ENCODE measurements at regions of chr20 and their contacts with region 1.

Region 1: DNA sequence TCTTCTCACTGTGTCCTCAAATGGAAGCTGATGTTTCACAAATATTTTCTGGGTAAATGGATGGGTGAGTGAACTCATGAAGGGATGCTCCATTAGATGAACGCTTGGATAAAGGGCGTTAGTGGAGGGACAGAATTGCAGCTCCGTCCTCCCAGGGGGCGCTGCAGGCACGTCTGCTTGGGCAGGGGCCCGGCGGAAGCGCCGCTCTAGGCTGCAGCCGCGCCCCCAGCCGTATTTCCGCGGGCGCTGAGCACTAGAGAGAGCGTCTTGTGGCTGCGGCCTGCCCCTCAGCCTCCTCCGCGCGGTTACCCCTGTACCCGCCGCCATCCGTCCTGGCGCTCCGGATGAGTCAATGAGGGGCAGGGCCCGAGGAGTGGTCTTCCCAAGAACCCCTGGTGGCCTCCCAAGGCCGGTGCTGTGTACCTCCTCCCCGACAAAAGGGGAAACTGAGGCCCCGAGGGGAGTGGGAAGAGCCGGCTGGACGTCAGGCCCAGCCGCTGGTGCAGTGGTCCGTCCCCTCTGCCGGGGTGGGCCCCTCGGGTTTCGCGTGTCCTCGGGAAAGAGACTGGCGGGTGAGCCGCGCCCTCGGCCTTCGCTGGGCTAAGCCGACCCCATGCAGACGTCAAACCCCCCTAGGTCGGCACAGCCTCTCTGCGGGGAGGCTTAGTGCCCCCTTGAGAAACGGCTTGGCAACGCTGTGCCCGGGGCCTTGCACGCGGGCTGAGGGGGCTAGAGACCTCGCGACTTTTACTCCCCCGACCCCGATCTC is 11.5 kb upstream of the SNHG17 start:
- DNase-seq: peak; percentile 77 to 98 (median 90)

Region 2: GRCh38 chr20:38242848-38243449 is 203.7 kb before region 1 on chr20:
- intact Hi-C with region 1: no loop called
- DNase-seq: no peak

Region 3: GRCh38 chr20:38434743-38435554 is 11.7 kb before region 1 on chr20 and contains the start of gene SNHG17:
- intact Hi-C with region 1: loop called (anchors 1 kb)
- DNase-seq: peak; percentile 81 to 99 (median 90)

Region 4: DNA sequence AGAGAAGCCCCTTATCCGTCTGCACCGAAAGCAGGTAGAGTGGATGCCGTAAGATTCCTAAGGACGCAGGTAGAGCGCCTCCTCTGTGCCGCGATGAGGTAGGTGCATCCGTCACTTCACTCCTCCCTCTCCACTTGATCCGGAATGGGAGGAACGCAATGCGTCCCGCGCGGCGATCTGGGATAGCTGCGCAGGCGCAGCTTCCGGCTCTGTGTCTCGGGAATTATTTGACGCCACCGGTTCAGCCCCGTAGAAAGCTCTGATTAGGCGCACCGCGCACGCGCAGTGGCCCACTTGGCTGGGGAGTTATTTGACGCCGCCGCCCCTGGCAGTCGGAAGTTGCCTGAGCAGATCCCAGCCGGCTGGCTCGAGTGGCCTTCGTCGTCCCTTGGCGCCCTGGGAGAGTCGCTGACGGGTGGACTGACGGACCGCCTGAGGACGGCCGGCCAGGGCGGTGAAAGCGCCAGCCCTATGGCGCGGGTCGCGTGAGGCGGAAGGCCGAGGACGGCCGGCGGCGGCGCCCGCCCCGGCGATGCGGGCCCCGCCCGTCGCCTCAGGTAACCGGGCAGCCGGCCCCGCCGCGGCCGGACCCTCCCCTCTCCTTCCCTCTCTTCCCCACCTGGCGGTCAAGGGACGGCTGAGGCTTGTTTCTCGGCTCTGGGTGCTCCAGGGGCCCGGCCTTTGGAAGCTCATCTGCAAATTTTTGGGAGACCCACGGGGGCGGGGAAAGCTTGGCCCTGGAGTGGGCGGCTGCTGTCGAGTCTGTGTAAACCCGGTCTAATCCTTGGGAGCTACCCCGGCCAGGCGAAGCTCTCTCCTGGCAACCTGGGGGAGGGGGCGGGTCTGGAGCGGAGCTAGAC is 26.1 kb after region 1 on chr20 and contains the start of gene RALGAPB:
- intact Hi-C with region 1: loop called (anchors 1 kb)
- DNase-seq: peak; percentile 95 to 99 (median 97)